Naive thymus-derived CD8-positive, alpha-beta T cell (primary cell): ENCODE measurements at regions of chr5 and their contacts with region 1.

Region 1: GRCh38 chr5:80181618-80182211 is 74.1 kb downstream of the SERINC5 start:
- DNase-seq: peak in 9 of 10 donors; percentile 32 to 87 (median 68)
- ATAC-seq: peak; percentile 62 to 68
- H3K4me3 Mint-ChIP-seq: peak overlapping the region; percentile 54 to 90 (median 64)
- H3K27ac Mint-ChIP-seq: peak overlapping the region; percentile 79 to 99 (median 97)
- H3K4me1 Mint-ChIP-seq: peaks cover 53 to 89% (median 89%) of the 10 kb centered on the region in 4 donors
- H3K27me3 Mint-ChIP-seq: no peaks in the 10 kb centered on the region

Region 2: DNA sequence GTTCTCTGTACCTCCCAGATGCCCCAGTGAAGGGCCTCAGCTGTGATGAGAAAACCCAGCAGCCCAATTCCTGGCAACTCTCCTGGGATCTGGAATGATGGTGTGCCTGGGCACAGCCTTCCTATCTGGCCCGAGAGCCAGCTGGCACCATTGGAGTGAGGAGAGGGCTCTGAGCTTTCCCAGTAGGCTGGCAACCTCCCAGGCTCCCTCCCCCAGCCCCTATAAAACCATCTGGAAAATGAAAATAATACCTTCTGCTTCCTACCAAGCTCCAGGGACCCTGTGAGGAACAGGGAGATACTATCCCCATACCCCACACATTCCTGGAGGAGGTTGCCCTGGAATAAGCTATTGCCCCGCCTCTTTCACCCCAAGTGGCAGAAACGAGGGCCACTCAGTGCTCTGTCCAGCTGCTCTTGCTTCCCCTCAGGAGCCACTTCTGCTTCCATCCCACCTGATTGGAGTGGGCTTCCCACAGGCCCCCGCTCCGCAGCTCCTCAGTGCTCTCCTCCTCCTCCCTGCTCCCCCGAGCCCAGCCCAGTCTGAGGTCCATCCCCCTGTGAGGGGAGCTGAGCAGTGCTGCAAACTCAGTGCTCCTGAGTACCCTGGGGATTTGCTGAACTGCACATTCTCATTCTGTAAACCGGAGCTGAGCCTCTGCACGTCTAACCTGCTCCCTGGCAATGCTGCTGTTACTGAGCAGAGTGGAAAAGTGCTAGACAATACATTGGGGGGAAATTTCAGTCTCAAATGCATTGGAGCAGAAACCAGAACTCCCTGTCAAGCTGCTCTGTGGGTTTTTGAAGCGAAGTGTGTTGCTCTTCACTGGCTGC is 71.9 kb before region 1 on chr5:
- POLR2A ChIA-PET with region 1: no interaction called
- DNase-seq: no peak
- ATAC-seq: peak; percentile 23 to 43
- H3K4me3 Mint-ChIP-seq: peak overlapping the region in 5 of 10 donors; percentile 28 to 71 (median 63)
- H3K27ac Mint-ChIP-seq: peak overlapping the region; percentile 63 to 92 (median 84)
- H3K4me1 Mint-ChIP-seq: peaks cover 32 to 82% (median 59%) of the 10 kb centered on the region in 4 donors
- H3K27me3 Mint-ChIP-seq: no peaks in the 10 kb centered on the region

Region 3: DNA sequence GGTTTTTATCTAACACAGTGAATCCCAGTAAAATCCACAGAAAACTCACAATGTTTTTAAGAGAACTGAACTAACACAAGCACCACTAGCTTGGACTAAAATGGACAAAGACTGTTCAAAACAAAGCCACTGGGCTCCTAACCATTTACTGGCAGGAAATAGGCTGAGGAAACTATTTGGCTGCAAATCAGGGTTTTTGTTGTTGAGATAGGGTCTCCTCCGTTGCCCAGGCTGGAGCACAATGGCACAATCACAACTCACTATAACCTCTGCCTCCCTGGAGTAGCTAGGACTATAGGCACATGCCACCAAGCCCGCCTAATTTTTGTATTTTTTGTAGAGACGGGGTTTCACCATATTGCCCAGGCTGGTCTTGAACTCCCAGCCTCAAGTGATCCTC is 46.8 kb before region 1 on chr5:
- POLR2A ChIA-PET with region 1: interaction called, 13 read pairs
- DNase-seq: no peak
- ATAC-seq: no peak
- H3K4me3 Mint-ChIP-seq: peak overlapping the region in 9 of 10 donors; percentile 38 to 83 (median 75)
- H3K27ac Mint-ChIP-seq: peak overlapping the region; percentile 85 to 98 (median 92)
- H3K4me1 Mint-ChIP-seq: peaks cover 54 to 92% (median 87%) of the 10 kb centered on the region in 4 donors
- H3K27me3 Mint-ChIP-seq: no peaks in the 10 kb centered on the region

Region 4: DNA sequence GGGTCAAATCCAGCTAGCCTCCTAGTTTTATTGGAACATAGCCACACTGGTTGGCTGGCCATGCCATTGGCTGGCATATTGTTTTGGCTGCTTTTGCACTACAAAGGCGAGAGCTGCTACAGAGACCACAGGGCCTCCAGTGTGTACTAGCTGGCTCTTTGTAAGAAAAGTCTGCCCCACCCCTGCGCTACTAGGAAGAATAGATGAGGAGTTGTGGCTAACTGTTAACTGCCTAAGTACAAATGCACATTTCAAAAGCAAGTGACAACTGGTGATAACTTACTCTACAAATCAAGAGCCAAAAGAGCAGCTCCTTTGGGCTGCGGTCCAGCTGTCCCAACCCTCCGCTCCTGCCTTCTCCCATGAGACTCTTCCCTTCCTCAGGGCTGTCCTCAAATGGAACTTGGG is 10.3 kb after region 1 on chr5:
- POLR2A ChIA-PET with region 1: interaction called, 187 read pairs
- DNase-seq: peak; percentile 24 to 81 (median 56)
- ATAC-seq: peak; percentile 74 to 82
- H3K4me3 Mint-ChIP-seq: peak overlapping the region; percentile 78 to 90 (median 85)
- H3K27ac Mint-ChIP-seq: peak overlapping the region; percentile 79 to 99 (median 94)
- H3K4me1 Mint-ChIP-seq: peaks cover 57 to 96% (median 87%) of the 10 kb centered on the region in 4 donors
- H3K27me3 Mint-ChIP-seq: no peaks in the 10 kb centered on the region

Region 5: DNA sequence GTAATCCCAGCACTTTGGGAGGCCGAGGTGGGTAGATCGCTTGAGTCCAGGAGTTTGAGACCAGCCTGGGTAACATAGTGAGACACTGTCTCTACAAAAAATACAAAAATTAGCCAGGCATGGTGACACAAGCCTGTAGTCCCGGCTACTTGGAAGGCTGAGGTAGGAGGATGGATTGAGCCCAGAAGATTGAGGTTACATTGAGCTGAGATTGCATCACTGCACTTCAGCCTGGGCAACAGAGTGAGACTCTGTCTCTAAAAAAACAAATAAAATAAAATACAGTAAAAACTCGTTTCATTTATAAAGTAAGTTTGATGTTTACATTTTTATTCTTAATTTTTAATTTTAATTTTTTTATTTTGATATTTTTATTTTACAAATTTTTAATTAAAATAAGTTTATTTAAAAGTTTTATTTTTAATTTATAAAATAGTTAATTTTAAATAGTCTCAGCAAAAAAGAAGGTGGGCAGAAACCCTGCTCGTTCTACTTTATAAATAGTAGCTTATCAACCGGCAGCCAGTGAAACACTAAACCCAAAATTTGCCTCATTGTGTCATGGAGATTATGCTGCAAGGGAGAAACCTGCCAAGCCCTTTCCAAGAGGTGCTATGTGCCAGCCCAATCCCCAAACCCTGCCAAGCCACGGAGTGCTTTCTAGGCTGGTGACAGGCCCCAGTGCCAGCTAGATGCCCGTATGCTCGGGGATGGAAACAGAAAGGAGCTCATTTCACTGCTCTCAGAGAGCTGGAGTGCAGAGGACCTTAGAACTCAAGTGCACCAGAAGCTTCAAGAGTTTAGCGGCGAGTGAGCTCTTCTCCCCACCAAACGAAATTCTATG is 35.3 kb after region 1 on chr5:
- POLR2A ChIA-PET with region 1: interaction called, 109 read pairs
- DNase-seq: peak in 1 of 10 donors; percentile 19
- ATAC-seq: peak; percentile 26 to 35
- H3K4me3 Mint-ChIP-seq: peak overlapping the region; percentile 46 to 92 (median 82)
- H3K27ac Mint-ChIP-seq: peak overlapping the region; percentile 85 to 98 (median 94)
- H3K4me1 Mint-ChIP-seq: peaks cover 51 to 95% (median 93%) of the 10 kb centered on the region in 4 donors
- H3K27me3 Mint-ChIP-seq: no peaks in the 10 kb centered on the region

Region 6: GRCh38 chr5:80268916-80269315 is 87.2 kb after region 1 on chr5:
- POLR2A ChIA-PET with region 1: interaction called, 14 read pairs
- DNase-seq: peak in 3 of 10 donors; percentile 28 to 48 (median 41)
- ATAC-seq: peak; percentile 48 to 54
- H3K4me3 Mint-ChIP-seq: peak overlapping the region; percentile 41 to 81 (median 70)
- H3K27ac Mint-ChIP-seq: peak overlapping the region; percentile 85 to 100 (median 96)
- H3K4me1 Mint-ChIP-seq: peaks cover 26 to 60% (median 48%) of the 10 kb centered on the region in 4 donors
- H3K27me3 Mint-ChIP-seq: no peaks in the 10 kb centered on the region

Region 7: DNA sequence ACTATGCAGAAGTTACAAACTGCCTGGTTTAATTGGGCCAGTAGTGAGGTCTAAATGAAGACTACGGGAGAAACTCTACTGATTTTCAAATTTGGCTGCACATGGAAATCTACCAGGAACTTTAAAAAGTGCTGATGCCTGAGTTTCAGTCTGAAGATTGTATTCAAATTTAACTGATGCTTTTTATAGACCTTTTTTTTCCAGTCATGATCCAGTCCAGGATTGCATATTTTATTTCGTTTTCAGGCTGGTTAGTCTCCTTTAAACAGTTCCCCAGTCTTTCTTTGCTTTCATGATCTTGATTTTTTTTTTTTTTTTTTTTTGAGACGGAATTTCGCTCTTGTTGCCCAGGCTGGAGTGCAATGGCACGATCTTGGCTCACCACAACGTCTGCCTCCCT is 114.4 kb after region 1 on chr5:
- POLR2A ChIA-PET with region 1: no interaction called
- DNase-seq: no peak
- ATAC-seq: no peak
- H3K4me3 Mint-ChIP-seq: no peak overlapping the region
- H3K27ac Mint-ChIP-seq: no peak overlapping the region
- H3K4me1 Mint-ChIP-seq: no peaks in the 10 kb centered on the region
- H3K27me3 Mint-ChIP-seq: peaks cover 0 to 3% (median 0%) of the 10 kb centered on the region in 5 donors

Region 8: GRCh38 chr5:80315244-80315643 is 133.5 kb after region 1 on chr5:
- POLR2A ChIA-PET with region 1: no interaction called
- DNase-seq: no peak
- ATAC-seq: no peak
- H3K4me3 Mint-ChIP-seq: no peak overlapping the region
- H3K27ac Mint-ChIP-seq: no peak overlapping the region
- H3K4me1 Mint-ChIP-seq: no peaks in the 10 kb centered on the region
- H3K27me3 Mint-ChIP-seq: peaks cover 0 to 17% (median 3%) of the 10 kb centered on the region in 5 donors

Region 9: DNA sequence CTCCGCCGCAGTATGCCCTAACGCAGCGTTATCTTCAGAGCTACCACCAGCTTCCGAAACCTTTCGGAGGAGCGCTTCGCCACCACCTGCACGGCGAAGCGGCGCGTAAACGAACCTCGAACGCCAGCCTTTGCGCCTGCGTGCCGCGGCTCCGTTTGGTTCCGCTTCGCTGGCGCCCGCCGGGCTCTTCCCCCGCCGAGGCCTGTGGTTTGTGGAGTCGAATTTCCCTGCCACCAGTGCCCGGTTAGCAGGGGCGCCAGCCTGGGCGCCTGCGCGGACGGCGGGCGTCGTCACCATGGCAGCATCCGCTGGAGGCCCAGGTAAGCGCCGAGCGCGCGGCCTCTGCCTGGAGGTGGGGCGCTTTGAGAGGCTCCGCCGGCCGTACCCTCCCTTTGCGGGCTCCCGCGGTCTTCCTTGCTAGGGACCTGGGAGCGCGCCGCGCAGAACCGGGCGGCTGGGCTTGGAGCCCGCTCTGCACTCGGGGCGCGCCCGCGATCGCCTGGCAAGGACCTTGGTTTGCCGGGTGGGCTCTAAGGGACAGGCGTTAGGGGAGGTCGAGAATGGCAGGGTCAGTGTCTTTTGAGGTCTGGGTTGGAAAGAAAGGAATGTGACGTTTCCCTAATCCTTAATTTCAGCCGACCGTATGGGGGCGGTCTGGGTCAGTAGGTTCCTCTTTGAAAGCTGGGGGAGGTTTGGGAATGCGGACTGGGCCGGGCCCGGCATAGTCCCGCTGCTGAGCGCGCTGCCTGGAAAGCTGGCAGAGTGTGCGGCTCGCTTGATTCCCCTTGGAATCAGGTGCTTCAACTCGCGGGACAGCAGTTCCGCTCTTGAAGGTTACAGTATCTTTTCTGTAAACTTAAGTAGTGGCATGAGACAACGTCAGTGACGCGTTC is 306.4 kb after region 1 on chr5 and contains the start of gene FAM151B:
- POLR2A ChIA-PET with region 1: no interaction called
- DNase-seq: peak; percentile 48 to 88 (median 74)
- ATAC-seq: peak; percentile 95
- H3K4me3 Mint-ChIP-seq: peak within 1 kb of the TSS; percentile 67 to 90 (median 85)
- H3K27ac Mint-ChIP-seq: peak within 1 kb of the TSS in 9 of 10 donors; percentile 27 to 85 (median 63)
- H3K4me1 Mint-ChIP-seq: peaks cover 8 to 18% (median 13%) of the 10 kb centered on the region in 4 donors
- H3K27me3 Mint-ChIP-seq: peaks cover 0 to 11% (median 0%) of the 10 kb centered on the region in 5 donors
- polyA plus RNA-seq, gene FAM151B: 0.57 TPM in 1 of 3 donors, not detected in the others